ENCODE measurements at regions of chr9 and their contacts with region 1.

Region 1: GRCh38 chr9:34048923-34049697 is 423 bp upstream of the UBAP2 start:
- DNase-seq: peak; percentile 98
- H3K27ac ChIP-seq: peak overlapping the region; percentile 96
- CTCF ChIP-seq: no peak

Region 2: DNA sequence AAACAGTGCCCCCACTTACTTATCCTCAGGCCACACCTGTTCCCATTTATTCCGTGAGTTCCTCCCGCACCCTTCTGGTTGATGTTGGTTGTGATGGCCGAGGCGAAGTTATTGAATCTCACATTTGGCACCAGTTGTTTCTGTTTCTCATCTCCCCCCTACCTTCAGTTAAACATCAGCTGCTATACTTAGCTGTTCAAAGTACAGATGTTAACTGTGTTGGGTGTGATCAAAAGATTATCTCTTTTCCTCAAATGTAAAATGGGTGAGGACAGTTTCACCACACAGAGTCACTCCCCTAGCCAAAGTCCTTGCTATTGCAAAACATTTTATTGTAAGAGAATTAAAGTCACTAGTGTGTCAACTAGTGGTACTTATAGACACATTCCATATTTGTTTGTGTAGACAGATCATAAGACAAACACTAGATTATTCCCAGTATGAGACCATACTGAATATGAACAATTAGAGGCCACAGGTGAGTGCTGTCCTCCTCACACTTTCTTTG is 296.9 kb before region 1 on chr9:
- CTCF ChIA-PET with region 1: no interaction called
- POLR2A ChIA-PET with region 1: no interaction called
- DNase-seq: no peak
- H3K27ac ChIP-seq: no peak overlapping the region
- CTCF ChIP-seq: no peak

Region 3: DNA sequence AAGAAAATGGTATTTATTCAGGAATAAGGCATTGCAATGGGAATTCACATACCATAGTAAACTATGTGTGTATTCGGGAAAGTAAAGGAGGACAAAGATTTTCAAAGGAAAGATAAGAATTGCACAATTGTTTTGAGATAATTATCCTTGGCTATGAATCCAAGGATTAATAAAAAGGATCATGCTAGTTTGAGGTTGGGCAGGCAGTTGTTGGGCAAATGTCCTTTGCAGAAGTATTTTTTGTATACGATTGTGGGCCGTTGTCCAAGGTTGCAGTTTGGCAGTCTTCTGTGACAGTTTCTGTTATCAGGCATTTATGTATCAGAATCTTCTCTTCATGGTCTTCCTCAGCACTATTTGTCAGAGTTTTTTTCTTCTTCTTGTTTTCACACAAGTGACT is 10.2 kb after region 1 on chr9:
- CTCF ChIA-PET with region 1: no interaction called
- POLR2A ChIA-PET with region 1: interaction called, 11 read pairs
- DNase-seq: no peak
- H3K27ac ChIP-seq: no peak overlapping the region
- CTCF ChIP-seq: no peak

Region 4: DNA sequence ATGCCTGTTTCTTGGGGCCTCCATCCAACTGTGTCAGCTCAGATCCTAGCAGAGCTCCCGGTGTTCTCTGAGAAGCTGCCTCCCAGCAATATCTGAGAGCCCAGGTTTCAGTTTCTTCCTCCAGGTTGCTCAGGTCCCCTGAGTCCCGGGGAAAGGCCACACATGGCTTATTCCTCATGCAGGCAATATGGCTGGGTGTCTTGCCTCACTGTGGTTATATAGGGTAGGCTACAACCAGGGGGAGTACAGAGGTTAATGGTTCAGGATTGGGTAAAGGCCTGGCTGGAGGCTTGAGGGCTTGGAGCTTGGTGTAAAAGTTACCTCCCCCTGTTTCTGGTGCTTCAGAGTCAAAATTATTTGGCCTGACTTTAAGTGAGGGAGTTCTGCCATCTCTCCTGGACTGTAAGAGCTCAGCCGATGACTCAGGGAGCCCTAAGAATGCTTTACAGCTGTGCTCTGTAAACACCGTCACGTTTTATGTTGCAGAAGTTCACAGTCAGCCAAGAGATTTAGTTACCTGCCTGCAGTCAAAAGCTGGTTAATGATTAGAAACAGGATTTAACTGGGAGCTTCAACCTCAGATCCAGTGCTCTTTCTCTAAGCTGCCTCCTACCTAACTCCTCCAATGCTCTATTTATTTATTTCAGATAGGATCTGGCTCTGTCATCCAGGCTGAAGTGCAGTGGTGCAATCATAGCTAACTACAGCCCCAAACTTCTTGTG is 23.9 kb after region 1 on chr9:
- CTCF ChIA-PET with region 1: interaction called, 12 read pairs
- POLR2A ChIA-PET with region 1: interaction called, 9 read pairs
- DNase-seq: peak; percentile 87
- H3K27ac ChIP-seq: peak overlapping the region; percentile 90
- CTCF ChIP-seq: no peak

Measured in RWPE1 (cell line).